Dorsolateral prefrontal cortex (tissue), 120 donors: ENCODE measurements at regions of chr5 and their contacts with region 1.

Region 1: GRCh38 chr5:173293817-173294672 is 34.2 kb downstream of the STC2 start:
- DNase-seq: peak; percentile 73 to 88 (median 78)
- H3K4me3 ChIP-seq: peak overlapping the region in 45 of 59 donors; percentile 2 to 58 (median 31)
- H3K27ac ChIP-seq: no peak overlapping the region
- H3K27me3 ChIP-seq: peaks cover 0 to 7% (median 0%) of the 10 kb centered on the region in 45 donors
- CTCF ChIP-seq: peak; percentile 85 to 99 (median 94)

Region 2: GRCh38 chr5:173331956-173332479 is 38.0 kb after region 1 on chr5:
- intact Hi-C with region 1: loop called (anchors 1 to 2 kb)
- DNase-seq: peak in 9 of 10 donors; percentile 67 to 84 (median 73)
- H3K4me3 ChIP-seq: no peak overlapping the region
- H3K27ac ChIP-seq: no peak overlapping the region
- H3K27me3 ChIP-seq: peaks cover 0 to 47% (median 30%) of the 10 kb centered on the region in 45 donors
- CTCF ChIP-seq: peak; percentile 49 to 95 (median 87)

Region 3: GRCh38 chr5:173420108-173420507 is 126.1 kb after region 1 on chr5:
- intact Hi-C with region 1: no loop called
- DNase-seq: peak in 7 of 10 donors; percentile 36 to 71 (median 56)
- H3K4me3 ChIP-seq: peak overlapping the region in 1 of 59 donors; percentile 32
- H3K27ac ChIP-seq: peak overlapping the region in 39 of 59 donors; percentile 4 to 78 (median 56)
- H3K27me3 ChIP-seq: no peaks in the 10 kb centered on the region
- CTCF ChIP-seq: no peak

Region 4: GRCh38 chr5:173498286-173498685 is 204.2 kb after region 1 on chr5:
- intact Hi-C with region 1: loop called (anchors 1 to 5 kb)
- DNase-seq: no peak
- H3K4me3 ChIP-seq: no peak overlapping the region
- H3K27ac ChIP-seq: no peak overlapping the region
- H3K27me3 ChIP-seq: peaks cover 0 to 14% (median 0%) of the 10 kb centered on the region in 45 donors
- CTCF ChIP-seq: no peak

Region 5: DNA sequence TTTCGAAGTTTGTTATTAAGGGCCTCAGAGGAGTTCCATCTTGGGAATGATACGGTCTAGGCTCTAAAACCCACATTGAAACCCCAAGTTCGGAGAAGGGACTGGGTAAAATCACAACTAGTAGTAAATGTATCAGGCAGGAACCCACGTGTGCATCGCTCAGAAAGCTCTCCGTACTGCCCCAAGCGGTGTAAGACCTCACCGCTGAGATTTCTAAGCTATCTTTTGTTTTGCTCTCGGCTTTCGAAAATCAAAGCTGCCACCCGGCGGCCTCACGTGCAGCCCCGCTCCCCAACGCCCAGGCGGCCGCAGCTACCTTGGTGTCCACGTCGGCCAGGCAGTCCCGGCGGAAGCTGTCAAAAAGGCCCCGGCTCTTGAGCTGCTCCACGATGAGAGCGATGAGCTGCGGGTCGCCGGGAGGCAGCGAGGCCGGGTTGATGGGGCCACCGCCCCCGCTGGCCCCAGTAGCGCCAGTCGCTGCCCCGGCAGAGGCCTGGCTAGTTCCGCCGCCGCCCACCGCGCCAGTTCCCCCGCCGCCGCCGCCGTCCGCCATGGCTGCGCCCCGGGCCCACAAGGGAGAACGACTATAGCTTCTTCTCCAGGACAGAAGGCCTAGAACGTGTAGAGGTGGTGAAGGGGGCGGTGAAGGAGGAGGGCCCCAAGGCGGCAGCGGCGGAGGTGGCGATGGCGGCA is 322.0 kb after region 1 on chr5:
- intact Hi-C with region 1: loop called in 1 of 2 experiments (anchors 2 kb)
- DNase-seq: peak; percentile 37 to 85 (median 66)
- H3K4me3 ChIP-seq: peak overlapping the region; percentile 77 to 99 (median 92)
- H3K27ac ChIP-seq: peak overlapping the region; percentile 42 to 97 (median 88)
- H3K27me3 ChIP-seq: no peaks in the 10 kb centered on the region
- CTCF ChIP-seq: peak; percentile 30 to 78 (median 62)

Region 6: GRCh38 chr5:173984218-173984617 is 690.2 kb after region 1 on chr5:
- intact Hi-C with region 1: loop called (anchors 10 kb)
- DNase-seq: no peak
- H3K4me3 ChIP-seq: no peak overlapping the region
- H3K27ac ChIP-seq: no peak overlapping the region
- H3K27me3 ChIP-seq: no peaks in the 10 kb centered on the region
- CTCF ChIP-seq: peak in 45 of 56 donors; percentile 11 to 58 (median 36)